ENCODE measurements at regions of chr2 and their contacts with region 1.

Region 1: GRCh38 chr2:33380001-33380609 is 96.3 kb upstream of the RASGRP3 start:
- DNase-seq: no peak
- H3K4me3 ChIP-seq: no peak overlapping the region
- H3K27ac ChIP-seq: no peak overlapping the region
- H3K4me1 ChIP-seq: no peaks in the 10 kb centered on the region
- H3K27me3 ChIP-seq: no peaks in the 10 kb centered on the region
- CTCF ChIP-seq: peak; percentile 63

Region 2: DNA sequence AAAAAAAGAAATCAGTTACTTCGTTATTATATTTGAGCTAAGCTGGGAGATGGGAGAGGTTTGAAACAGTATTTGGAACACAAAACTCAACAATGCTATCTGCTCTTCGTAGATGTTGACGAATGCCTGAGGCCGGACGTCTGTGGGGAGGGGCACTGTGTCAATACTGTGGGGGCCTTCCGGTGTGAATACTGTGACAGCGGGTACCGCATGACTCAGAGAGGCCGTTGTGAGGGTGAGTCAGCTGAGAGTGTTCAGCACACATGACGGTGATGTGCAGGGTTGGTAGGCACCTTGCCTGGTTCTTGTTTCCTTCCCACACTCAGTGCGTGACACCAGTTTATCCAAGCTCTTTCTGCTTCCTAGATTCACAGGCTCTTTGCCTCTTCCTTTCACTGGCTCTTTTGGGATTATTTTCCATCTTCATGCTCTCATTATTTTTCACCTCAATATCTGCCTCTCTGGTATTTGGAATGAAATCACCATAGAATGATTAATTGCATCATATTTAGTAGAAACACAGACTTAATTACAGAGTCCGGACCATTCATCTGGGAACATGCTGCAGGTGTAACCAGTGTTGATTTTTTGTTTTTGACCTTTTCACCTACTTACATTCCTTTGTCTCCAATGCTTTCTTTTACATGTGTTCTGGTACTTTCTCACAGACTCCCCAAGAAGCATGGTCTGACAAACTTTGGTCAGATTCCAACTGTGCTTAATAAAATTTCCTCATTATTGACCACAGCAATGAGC is 104.2 kb before region 1 on chr2:
- CTCF ChIA-PET with region 1: interaction called, 12 read pairs
- POLR2A ChIA-PET with region 1: no interaction called
- intact Hi-C with region 1: no loop called
- DNase-seq: peak; percentile 37
- H3K4me3 ChIP-seq: no peak overlapping the region
- H3K27ac ChIP-seq: no peak overlapping the region
- H3K4me1 ChIP-seq: no peaks in the 10 kb centered on the region
- H3K27me3 ChIP-seq: no peaks in the 10 kb centered on the region
- CTCF ChIP-seq: no peak

Region 3: GRCh38 chr2:33395655-33396249 is 15.6 kb after region 1 on chr2:
- CTCF ChIA-PET with region 1: interaction called, 10 read pairs
- POLR2A ChIA-PET with region 1: no interaction called
- intact Hi-C with region 1: no loop called
- DNase-seq: peak; percentile 67
- H3K4me3 ChIP-seq: no peak overlapping the region
- H3K27ac ChIP-seq: no peak overlapping the region
- H3K4me1 ChIP-seq: no peaks in the 10 kb centered on the region
- H3K27me3 ChIP-seq: no peaks in the 10 kb centered on the region
- CTCF ChIP-seq: peak; percentile 81

Measured in A673 (cell line).